SK-N-SH (cell line): ENCODE measurements at regions of chr5 and their contacts with region 1.

Region 1: DNA sequence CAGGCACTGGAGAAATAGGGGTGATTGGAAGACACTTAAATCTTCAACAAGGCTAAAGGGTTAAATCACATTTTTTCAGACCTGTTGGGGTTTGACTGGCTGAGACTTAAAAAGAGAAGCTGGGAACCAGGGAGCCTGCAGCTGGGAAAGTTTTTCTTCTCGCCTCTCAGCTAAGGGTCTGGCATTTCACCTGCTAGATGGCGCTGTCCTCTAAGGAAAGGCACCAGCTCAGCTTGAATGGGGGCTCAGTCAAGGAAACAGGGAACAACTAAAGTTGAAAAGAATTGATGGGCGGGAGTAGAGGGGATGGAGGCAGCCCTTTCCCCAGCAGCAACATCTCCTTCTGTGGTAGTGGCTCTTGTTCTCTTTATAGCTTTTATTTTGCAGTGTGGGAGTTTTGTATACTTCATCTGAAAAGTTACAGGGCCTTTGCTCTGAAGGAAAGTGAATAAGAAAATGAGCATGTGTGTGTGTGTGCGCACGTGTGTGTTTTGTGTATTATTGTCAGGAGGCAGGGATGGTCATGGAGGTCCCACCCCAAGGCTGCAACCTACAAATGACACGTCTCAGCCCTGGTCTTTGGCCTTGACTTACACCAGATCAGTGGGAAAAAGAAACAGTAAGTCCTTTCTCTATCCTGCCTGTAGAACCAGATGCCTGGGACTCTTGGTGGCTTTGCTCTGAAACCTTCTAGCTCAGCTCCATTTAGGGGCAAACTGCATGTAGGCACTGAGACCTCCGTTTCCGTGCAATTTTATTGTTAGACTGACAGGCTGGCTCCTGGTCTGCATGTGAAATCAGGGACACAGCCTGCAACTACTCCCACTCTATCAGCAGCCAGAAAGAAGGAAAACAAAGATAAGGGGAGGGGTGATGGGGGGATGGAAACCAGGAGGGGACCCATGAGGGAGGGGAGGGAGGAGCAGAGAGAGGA is 316.2 kb upstream of the CLINT1 start:
- DNase-seq: peak; percentile 76
- H3K4me3 ChIP-seq: peak overlapping the region in 1 of 2 experiments; percentile 43; a peak in 1 of 4 replicates
- H3K27ac ChIP-seq: no peak overlapping the region
- H3K4me1 ChIP-seq: peaks cover 0 to 2% of the 10 kb centered on the region in 2 experiments; a peak in 1 of 4 replicates
- H3K27me3 ChIP-seq: no peaks in the 10 kb centered on the region
- CTCF ChIP-seq: peak; percentile 87
- EP300 ChIP-seq: no peak
- RAD21 ChIP-seq: peak; percentile 96

Region 2: GRCh38 chr5:158074992-158075769 is 100.0 kb before region 1 on chr5:
- CTCF ChIA-PET with region 1: interaction called, 28 read pairs
- POLR2A ChIA-PET with region 1: no interaction called
- DNase-seq: peak; percentile 61
- H3K4me3 ChIP-seq: no peak overlapping the region; a peak in 1 of 4 replicates
- H3K27ac ChIP-seq: peak overlapping the region in 1 of 2 experiments; percentile 55; a peak in 1 of 4 replicates
- H3K4me1 ChIP-seq: peaks cover 0 to 3% of the 10 kb centered on the region in 2 experiments; a peak in 2 of 4 replicates
- H3K27me3 ChIP-seq: peaks cover 2% of the 10 kb centered on the region; the same call in 1 of the 2 replicates
- CTCF ChIP-seq: peak; percentile 89
- EP300 ChIP-seq: peak in 1 of 2 experiments; percentile 43; a peak in 1 of 4 replicates
- RAD21 ChIP-seq: peak; percentile 83

Region 3: GRCh38 chr5:158135682-158136179 is 39.5 kb before region 1 on chr5:
- CTCF ChIA-PET with region 1: no interaction called
- POLR2A ChIA-PET with region 1: no interaction called
- DNase-seq: no peak
- H3K4me3 ChIP-seq: no peak overlapping the region
- H3K27ac ChIP-seq: no peak overlapping the region
- H3K4me1 ChIP-seq: no peaks in the 10 kb centered on the region; a peak in 1 of 4 replicates
- H3K27me3 ChIP-seq: no peaks in the 10 kb centered on the region
- CTCF ChIP-seq: no peak
- EP300 ChIP-seq: no peak
- RAD21 ChIP-seq: no peak

Region 4: DNA sequence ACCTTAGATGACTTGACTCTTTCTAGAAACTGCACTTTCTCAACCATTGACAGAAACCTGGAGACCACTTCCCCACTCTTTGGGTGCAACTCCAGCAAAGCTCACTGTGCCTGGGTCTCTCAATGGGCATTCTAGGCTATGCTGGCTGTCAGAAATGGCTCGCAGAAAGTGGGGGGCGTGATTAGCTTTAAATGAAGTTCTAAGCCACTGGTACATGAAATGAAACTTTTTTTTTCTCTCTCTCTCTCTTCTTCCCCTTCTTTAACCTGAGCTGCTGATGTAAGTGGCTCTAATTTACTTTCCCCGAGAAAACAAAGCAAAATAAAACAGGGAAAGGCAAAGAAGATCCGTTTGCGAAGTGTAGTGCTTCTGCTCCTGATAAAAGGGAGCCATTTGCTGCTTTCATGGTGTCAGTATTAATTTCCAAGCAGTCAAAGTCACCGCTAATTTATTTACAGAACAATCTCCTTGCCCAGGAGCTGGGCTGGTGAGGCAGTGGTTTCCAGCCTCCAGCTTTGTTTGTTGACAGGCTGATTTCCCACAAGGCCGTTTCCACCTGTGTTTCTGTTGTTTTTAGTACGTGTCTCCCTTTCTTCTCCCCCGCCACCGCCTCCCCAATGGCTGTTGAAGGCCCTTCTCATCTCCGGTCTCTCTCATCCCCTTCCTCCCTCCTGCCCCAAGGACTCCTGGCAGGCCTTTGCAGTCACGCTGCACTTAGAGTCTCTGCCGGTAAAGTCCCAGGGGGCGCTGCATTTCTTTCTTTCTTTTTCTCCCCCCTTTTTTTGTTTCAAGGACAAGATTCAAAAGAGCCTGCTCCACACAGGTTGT is 501.7 kb after region 1 on chr5:
- CTCF ChIA-PET with region 1: interaction called, 10 read pairs
- POLR2A ChIA-PET with region 1: no interaction called
- DNase-seq: no peak
- H3K4me3 ChIP-seq: no peak overlapping the region
- H3K27ac ChIP-seq: no peak overlapping the region
- H3K4me1 ChIP-seq: no peaks in the 10 kb centered on the region; a peak in 1 of 4 replicates
- H3K27me3 ChIP-seq: no peaks in the 10 kb centered on the region; the same call in 1 of the 2 replicates
- CTCF ChIP-seq: no peak
- EP300 ChIP-seq: no peak
- RAD21 ChIP-seq: no peak

Region 5: DNA sequence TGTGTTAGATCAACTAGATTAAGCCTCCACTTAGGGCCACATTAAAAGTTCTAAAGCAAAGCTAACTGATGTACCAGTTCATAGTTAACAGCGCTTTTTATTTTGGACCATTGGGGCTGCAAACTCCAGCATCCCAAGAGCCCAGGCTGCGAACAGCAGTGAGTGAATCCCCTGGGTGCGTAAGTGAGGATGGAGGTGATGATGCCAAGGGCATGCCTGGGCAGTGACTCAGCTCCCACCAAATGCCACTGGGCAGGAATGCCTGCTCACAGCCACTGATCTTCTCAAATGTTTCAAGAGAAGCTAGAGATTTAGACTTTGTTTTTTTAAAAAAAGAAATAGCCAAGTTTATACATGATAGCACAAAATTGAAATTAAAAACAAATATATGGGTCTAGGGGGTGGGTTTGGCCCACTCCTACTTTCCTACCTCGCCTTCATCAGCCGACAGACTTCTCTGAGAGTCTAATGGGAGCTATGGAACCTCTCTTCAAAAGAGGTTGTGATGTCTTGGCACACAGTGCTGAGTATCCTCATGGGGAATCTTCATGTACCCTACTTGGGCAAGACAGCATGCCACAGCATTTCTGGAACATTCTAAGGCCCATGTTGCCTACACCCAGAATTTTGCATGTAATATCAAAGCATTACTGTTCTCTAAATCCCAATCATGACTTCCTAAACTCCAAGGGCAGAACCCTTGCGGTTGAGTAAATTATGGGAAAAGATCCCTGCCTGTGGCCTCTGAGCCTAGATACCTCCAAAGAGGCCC is 526.4 kb after region 1 on chr5:
- CTCF ChIA-PET with region 1: interaction called, 12 read pairs
- POLR2A ChIA-PET with region 1: no interaction called
- DNase-seq: no peak
- H3K4me3 ChIP-seq: peak overlapping the region in 1 of 2 experiments; percentile 25; a peak in 1 of 4 replicates
- H3K27ac ChIP-seq: peak overlapping the region; percentile 22 to 74; a peak in 3 of 4 replicates
- H3K4me1 ChIP-seq: peaks cover 3 to 13% of the 10 kb centered on the region in 2 experiments
- H3K27me3 ChIP-seq: no peaks in the 10 kb centered on the region
- CTCF ChIP-seq: no peak
- EP300 ChIP-seq: peak in 1 of 2 experiments; percentile 47; a peak in 1 of 4 replicates
- RAD21 ChIP-seq: no peak

Region 6: GRCh38 chr5:159100025-159100781 is 925.0 kb after region 1 on chr5:
- CTCF ChIA-PET with region 1: interaction called, 18 read pairs
- POLR2A ChIA-PET with region 1: no interaction called
- DNase-seq: peak; percentile 94
- H3K4me3 ChIP-seq: peak overlapping the region; percentile 65 to 84
- H3K27ac ChIP-seq: peak overlapping the region; percentile 74 to 90
- H3K4me1 ChIP-seq: peaks cover 5 to 8% of the 10 kb centered on the region in 2 experiments; a peak in 2 of 4 replicates
- H3K27me3 ChIP-seq: peaks cover 18% of the 10 kb centered on the region; the same call in 1 of the 2 replicates
- CTCF ChIP-seq: no peak
- EP300 ChIP-seq: no peak; a peak in 1 of 4 replicates
- RAD21 ChIP-seq: peak; percentile 13; the same call in 1 of the 2 replicates

Region 7: DNA sequence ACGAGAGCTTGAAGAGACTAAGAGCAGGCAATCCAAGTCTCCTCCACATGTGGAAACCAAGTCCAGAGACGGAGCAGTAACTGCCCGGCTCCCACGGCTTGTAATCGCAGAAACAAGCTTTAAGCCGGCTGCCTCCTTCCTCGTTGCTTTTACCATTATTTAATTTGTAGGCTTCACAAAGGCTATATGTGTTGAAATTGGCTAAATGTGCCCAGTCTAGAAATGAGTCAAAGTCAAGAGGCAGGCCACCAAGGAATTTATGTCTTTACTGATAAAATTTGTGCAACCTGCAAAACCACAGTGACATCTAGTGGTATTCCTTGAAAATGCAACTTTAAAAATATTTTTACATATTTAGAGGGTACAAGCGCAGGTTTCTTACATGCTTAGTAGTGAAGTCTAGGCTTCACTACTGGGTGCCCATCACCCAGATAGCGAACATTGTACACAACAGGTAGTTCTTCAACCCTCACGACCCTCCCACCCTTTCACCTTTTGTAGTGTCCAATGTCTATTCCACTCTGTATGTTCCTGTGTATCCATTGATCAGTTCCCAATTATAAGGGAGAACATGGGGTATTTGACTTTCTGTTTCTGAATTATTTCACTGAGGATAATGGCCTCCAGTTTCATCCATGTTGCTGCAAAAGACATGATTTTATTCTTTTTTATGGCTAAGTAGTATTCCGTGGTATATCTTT is 958.0 kb after region 1 on chr5:
- CTCF ChIA-PET with region 1: interaction called, 20 read pairs
- POLR2A ChIA-PET with region 1: no interaction called
- DNase-seq: peak; percentile 32
- H3K4me3 ChIP-seq: no peak overlapping the region; a peak in 1 of 4 replicates
- H3K27ac ChIP-seq: no peak overlapping the region
- H3K4me1 ChIP-seq: no peaks in the 10 kb centered on the region; a peak in 2 of 4 replicates
- H3K27me3 ChIP-seq: no peaks in the 10 kb centered on the region; the same call in 1 of the 2 replicates
- CTCF ChIP-seq: peak; percentile 84
- EP300 ChIP-seq: no peak
- RAD21 ChIP-seq: peak; percentile 89